Psoas muscle (tissue), 8 donors: ENCODE measurements at regions of chr1 and their contacts with region 1.

Region 1: DNA sequence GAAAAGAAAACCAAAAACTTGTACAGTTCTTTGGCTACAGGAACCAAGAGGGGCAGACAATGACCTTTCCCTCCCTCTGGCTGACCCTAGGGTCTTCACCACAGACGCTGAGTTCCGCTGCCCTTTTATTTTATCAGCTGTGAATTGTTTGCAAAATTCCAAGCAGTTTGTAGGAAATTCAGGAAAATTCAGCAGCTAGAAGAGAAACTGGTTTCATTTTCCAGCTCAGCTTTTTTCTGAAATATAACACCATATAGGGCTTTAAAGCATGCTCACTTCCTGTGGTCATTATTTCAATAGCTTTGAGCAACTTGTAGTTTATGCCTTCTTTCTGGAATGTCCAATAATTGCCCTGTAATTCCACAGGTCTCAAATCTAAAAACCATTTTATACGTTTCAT is 5.5 kb upstream of the PIK3R3 start:
- DNase-seq: no peak
- ATAC-seq: no peak
- H3K4me3 ChIP-seq: no peak overlapping the region
- H3K27ac ChIP-seq: no peak overlapping the region
- H3K4me1 ChIP-seq: peaks cover 21% of the 10 kb centered on the region
- H3K27me3 ChIP-seq: no peaks in the 10 kb centered on the region
- CTCF ChIP-seq: no peak

Region 2: DNA sequence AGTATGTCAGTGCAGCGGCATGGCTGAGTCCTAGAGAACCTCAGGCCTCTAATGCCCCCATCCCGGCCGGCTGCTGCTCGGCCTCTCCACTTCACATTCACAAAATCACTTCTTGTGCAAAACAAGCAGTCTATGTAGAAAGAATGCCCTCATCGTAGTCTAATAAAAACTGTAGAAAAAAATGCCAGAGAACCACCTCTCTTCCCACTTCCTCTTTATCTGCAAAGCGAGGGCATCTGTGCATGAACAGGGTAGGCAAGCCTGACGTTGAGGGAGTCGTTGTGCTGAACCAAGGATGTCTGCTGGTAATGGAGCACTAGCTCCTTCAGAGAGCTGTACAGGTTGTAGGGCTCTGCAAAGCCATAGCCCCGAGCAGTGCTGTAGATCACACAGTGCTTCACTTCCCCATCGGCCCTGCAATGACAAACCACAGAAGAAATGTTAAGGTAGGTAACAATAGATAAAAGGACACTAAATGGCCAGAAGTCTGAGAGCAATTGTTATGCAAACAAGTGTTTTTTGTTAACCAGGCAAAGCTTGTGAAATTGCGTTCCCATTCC is 94.4 kb before region 1 on chr1:
- intact Hi-C with region 1: loop called (anchors 2 to 5 kb)
- DNase-seq: no peak
- ATAC-seq: no peak
- H3K4me3 ChIP-seq: no peak overlapping the region
- H3K27ac ChIP-seq: no peak overlapping the region
- H3K4me1 ChIP-seq: peaks cover 42% of the 10 kb centered on the region
- H3K27me3 ChIP-seq: no peaks in the 10 kb centered on the region
- CTCF ChIP-seq: no peak